ENCODE measurements at regions of chr2 and their contacts with region 1.

Region 1: DNA sequence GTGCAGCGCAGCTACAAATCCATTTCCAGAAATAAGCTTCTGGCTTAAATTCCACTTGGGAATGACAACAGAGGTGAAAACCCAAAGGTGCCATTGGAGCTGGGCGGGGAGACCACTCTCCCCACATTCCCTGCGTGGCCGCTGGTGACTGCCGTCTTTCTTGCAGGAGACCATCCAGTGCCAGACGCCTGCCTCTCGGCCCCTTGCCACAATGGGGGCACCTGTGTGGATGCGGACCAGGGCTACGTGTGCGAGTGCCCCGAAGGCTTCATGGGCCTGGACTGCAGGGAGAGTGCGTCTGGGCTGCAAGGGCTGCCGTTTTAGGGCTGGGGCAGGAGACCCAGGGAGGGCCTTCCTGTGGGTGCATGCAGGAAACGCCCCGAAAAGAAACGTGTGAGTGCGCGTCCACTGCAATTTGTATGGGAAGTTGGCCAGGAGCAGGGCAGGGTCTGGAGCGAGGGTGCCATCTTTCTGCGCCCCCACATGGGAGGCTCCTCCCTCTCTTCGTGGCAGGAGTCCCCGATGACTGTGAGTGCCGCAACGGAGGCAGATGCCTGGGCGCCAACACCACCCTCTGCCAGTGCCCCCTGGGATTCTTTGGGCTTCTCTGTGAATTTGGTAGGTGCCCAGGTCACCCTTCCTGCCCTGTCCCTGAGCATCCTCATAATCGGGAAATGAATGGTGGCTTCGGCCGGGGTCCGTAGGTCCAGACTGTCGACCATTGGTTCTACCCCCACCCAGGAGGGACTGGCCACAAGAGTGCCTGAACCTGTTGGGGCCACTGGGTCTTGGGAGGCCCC is 49.9 kb downstream of the SNED1 start:
- DNase-seq: no peak
- H3K4me3 Mint-ChIP-seq: no peak overlapping the region
- H3K27ac Mint-ChIP-seq: no peak overlapping the region
- H3K4me1 Mint-ChIP-seq: no peaks in the 10 kb centered on the region
- H3K27me3 Mint-ChIP-seq: peaks cover 26% of the 10 kb centered on the region
- CTCF ChIP-seq: no peak

Region 2: GRCh38 chr2:241073193-241074064 is 25.1 kb after region 1 on chr2:
- CTCF ChIA-PET with region 1: interaction called, 10 read pairs
- intact Hi-C with region 1: no loop called
- DNase-seq: no peak
- H3K4me3 Mint-ChIP-seq: no peak overlapping the region
- H3K27ac Mint-ChIP-seq: no peak overlapping the region
- H3K4me1 Mint-ChIP-seq: no peaks in the 10 kb centered on the region
- H3K27me3 Mint-ChIP-seq: no peaks in the 10 kb centered on the region
- CTCF ChIP-seq: no peak